Posterior cingulate gyrus (tissue), 11 donors: ENCODE measurements at regions of chr9 and their contacts with region 1.

Region 1: GRCh38 chr9:5886114-5886939 is 4.4 kb upstream of the MLANA start:
- DNase-seq: peak; percentile 49 to 96 (median 80)

Region 2: DNA sequence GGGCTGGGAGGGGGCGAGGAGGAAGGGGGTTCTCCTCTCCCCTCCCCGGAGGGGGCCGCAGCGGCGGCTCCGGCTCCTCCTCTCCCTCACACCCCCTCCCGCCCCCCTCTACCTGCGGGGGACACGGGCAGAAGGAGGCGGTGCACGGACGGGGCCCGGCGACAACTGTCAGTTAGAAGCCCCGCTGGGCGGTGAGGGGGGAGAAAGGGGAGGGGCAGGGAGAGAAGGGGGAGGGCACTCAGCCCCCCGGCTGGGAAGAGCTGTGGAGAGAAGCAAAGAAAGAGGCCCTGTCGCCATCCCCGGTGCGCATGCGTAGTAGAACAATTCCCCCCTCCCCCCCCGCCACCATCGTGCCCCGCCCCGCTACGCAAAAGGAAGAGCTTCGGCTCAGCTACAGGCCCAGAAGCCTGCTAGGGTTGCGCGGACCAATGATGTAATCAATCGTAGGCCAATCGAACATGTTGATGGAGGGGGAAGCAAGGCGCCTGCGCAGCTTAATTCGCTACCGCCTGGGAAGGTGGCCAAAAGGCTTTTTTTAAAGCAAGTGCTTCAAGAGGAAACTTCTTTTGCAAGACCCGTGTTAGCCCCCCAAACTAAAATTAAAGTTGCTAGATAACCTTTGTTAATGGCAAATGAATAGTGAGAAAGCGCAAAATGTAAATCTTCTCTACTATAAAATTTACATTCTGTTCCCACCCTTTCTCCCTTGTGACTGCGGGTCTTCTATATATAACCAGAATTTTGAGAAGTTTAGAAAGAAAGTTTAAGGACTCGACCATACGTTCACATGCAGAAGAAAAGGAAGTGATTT is 122.0 kb after region 1 on chr9:
- intact Hi-C with region 1: loop called (anchors 5 kb)
- DNase-seq: peak; percentile 89 to 99 (median 92)

Region 3: GRCh38 chr9:6055213-6055612 is 168.9 kb after region 1 on chr9:
- intact Hi-C with region 1: loop called (anchors 1 kb)
- DNase-seq: no peak

Region 4: GRCh38 chr9:6695121-6695814 is 808.9 kb after region 1 on chr9:
- intact Hi-C with region 1: no loop called
- DNase-seq: peak in 1 of 10 donors; percentile 31